K562 (cell line): ENCODE measurements at regions of chr6 and their contacts with region 1.

Region 1: GRCh38 chr6:70310063-70310694 is 7.3 kb upstream of the COL9A1 start:
- DNase-seq: peak in 3 of 4 experiments; percentile 14 to 66 (median 20)
- ATAC-seq: peak; percentile 73
- H3K4me3 ChIP-seq: no peak overlapping the region
- H3K27ac ChIP-seq: no peak overlapping the region
- H3K4me1 ChIP-seq: no peaks in the 10 kb centered on the region; a peak in 1 of 5 replicates
- H3K27me3 ChIP-seq: peaks cover 0 to 8% of the 10 kb centered on the region in 2 experiments; a peak in 2 of 5 replicates
- CTCF ChIP-seq: peak; percentile 54 to 90 (median 70); a peak in 5 of 6 replicates
- EP300 ChIP-seq: no peak
- POLR2A ChIP-seq: no peak
- RAD21 ChIP-seq: peak; percentile 93 to 97

Region 2: DNA sequence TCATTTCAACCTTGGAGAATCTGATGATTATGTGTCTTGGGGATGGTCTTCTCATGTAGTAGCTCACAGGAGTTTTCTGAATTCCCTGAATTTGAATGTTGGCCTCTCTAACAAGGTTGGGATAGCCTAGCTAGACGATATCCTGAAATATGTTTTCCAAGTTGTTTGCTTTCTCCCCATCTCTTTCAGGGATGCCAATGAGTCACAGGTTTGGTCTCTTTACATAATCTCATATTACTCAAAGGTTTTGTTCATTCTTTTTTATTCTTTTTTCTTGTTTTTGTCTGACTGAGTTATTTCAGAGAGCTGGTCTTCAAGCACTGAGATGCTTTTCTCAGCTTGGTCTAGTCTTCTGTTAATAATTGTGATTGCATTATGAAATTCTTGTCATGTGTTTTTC is 35.4 kb after region 1 on chr6:
- CTCF ChIA-PET with region 1: no interaction called
- POLR2A ChIA-PET with region 1: no interaction called
- in situ Hi-C with region 1: no loop called
- intact Hi-C with region 1: no loop called
- DNase-seq: no peak
- ATAC-seq: no peak
- H3K4me3 ChIP-seq: no peak overlapping the region
- H3K27ac ChIP-seq: no peak overlapping the region
- H3K4me1 ChIP-seq: no peaks in the 10 kb centered on the region; a peak in 1 of 5 replicates
- H3K27me3 ChIP-seq: no peaks in the 10 kb centered on the region
- CTCF ChIP-seq: no peak
- EP300 ChIP-seq: no peak
- POLR2A ChIP-seq: no peak
- RAD21 ChIP-seq: no peak

Region 3: DNA sequence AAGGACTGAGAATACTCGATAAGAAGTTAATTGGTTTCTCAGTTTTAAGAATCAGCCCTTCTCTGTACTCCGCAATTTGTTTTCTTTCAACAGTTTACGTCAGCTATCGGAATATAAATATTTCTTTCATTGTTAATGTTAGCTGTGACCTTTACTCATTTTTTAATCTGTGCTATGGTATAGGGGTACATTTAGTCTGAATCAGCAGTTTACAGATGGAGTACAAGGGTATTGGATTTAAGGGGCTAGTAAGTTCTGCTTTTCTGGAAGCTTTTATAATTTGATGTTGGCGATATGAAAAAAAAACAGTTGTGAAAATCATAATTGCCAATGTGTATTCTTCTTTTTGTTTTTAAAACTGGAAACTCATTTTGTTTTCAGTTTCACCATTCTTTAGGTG is 126.1 kb after region 1 on chr6:
- CTCF ChIA-PET with region 1: no interaction called
- POLR2A ChIA-PET with region 1: no interaction called
- in situ Hi-C with region 1: no loop called
- intact Hi-C with region 1: no loop called
- DNase-seq: no peak
- ATAC-seq: no peak
- H3K4me3 ChIP-seq: no peak overlapping the region
- H3K27ac ChIP-seq: no peak overlapping the region
- H3K4me1 ChIP-seq: no peaks in the 10 kb centered on the region
- H3K27me3 ChIP-seq: no peaks in the 10 kb centered on the region
- CTCF ChIP-seq: no peak
- EP300 ChIP-seq: no peak
- POLR2A ChIP-seq: no peak
- RAD21 ChIP-seq: no peak

Region 4: DNA sequence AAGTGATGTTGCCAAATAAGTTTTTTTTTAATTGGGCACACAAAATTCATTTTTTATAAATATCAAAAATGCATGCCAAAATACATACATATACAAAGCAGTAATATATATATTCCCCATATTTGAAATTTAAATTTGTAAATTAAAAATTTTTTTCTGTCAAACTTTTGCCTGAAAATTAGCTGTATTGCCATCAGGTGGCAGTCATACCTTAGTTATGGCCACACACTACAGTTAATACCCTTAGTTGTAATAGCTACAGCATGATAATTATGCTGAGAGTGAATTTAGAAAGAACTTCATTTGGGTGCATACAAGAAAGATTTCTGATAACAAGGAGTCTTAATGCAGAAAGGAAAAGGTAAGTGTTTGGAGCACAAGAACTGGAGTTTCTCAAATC is 210.4 kb after region 1 on chr6:
- CTCF ChIA-PET with region 1: no interaction called
- POLR2A ChIA-PET with region 1: no interaction called
- in situ Hi-C with region 1: no loop called
- intact Hi-C with region 1: loop called (anchors 10 kb)
- DNase-seq: peak in 3 of 4 experiments; percentile 7 to 17 (median 9)
- ATAC-seq: peak; percentile 69
- H3K4me3 ChIP-seq: no peak overlapping the region
- H3K27ac ChIP-seq: no peak overlapping the region
- H3K4me1 ChIP-seq: no peaks in the 10 kb centered on the region
- H3K27me3 ChIP-seq: no peaks in the 10 kb centered on the region
- CTCF ChIP-seq: peak; percentile 22 to 62 (median 31); a peak in 4 of 6 replicates
- EP300 ChIP-seq: no peak
- POLR2A ChIP-seq: no peak
- RAD21 ChIP-seq: peak; percentile 71 to 76

Region 5: GRCh38 chr6:71012866-71013469 is 702.8 kb after region 1 on chr6:
- CTCF ChIA-PET with region 1: interaction called, 3 read pairs
- POLR2A ChIA-PET with region 1: no interaction called
- in situ Hi-C with region 1: no loop called
- intact Hi-C with region 1: loop called (anchors 2 kb)
- DNase-seq: peak; percentile 57 to 70 (median 64)
- ATAC-seq: peak; percentile 93
- H3K4me3 ChIP-seq: no peak overlapping the region
- H3K27ac ChIP-seq: no peak overlapping the region
- H3K4me1 ChIP-seq: no peaks in the 10 kb centered on the region
- H3K27me3 ChIP-seq: no peaks in the 10 kb centered on the region
- CTCF ChIP-seq: peak; percentile 64 to 76 (median 71)
- EP300 ChIP-seq: no peak
- POLR2A ChIP-seq: no peak
- RAD21 ChIP-seq: peak; percentile 72 to 83